ENCODE measurements at regions of chr2 and their contacts with region 1.

Region 1: DNA sequence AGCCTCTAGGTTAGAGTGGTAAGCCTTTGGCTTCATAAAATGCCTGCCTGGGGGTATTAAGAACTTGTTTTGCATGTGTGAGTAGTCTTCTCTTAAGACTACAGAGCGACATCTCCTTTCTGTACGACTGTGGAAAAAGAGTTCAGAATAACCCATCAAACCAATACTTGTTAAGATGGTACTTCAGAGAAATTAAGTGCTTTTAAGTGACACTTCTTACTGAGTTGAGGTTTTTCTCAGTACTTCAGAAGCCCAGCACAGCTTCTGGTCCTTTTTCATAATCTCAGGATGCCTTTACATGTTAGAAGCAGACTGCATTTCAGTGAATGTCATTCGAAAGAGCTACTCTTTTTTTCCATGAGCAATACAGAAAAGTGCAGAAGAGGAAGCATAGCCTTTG is 10.8 kb downstream of the XRCC5 start:
- DNase-seq: no peak
- ATAC-seq: no peak
- H3K4me3 ChIP-seq: no peak overlapping the region
- H3K27ac ChIP-seq: no peak overlapping the region
- H3K4me1 ChIP-seq: peaks cover 15% of the 10 kb centered on the region
- H3K27me3 ChIP-seq: no peaks in the 10 kb centered on the region
- CTCF ChIP-seq: no peak

Region 2: GRCh38 chr2:216202626-216203250 is 82.8 kb after region 1 on chr2:
- CTCF ChIA-PET with region 1: no interaction called
- POLR2A ChIA-PET with region 1: no interaction called
- intact Hi-C with region 1: loop called (anchors 5 kb)
- DNase-seq: no peak
- ATAC-seq: no peak
- H3K4me3 ChIP-seq: no peak overlapping the region
- H3K27ac ChIP-seq: no peak overlapping the region
- H3K4me1 ChIP-seq: no peaks in the 10 kb centered on the region
- H3K27me3 ChIP-seq: no peaks in the 10 kb centered on the region
- CTCF ChIP-seq: no peak

Measured in PC-3 (cell line).